OCI-LY7 (cell line): ENCODE measurements at regions of chr3 and their contacts with region 1.

Region 1: GRCh38 chr3:13452490-13453335 is 27.4 kb upstream of the HDAC11 start:
- DNase-seq: peak; percentile 77
- H3K4me3 ChIP-seq: peak overlapping the region; percentile 65
- H3K27ac ChIP-seq: peak overlapping the region; percentile 83
- H3K4me1 ChIP-seq: peaks cover 24% of the 10 kb centered on the region
- CTCF ChIP-seq: peak; percentile 95

Region 2: GRCh38 chr3:12954891-12955650 is 497.6 kb before region 1 on chr3:
- CTCF ChIA-PET with region 1: no interaction called
- POLR2A ChIA-PET with region 1: interaction called, 10 read pairs
- intact Hi-C with region 1: no loop called
- DNase-seq: peak; percentile 52
- H3K4me3 ChIP-seq: no peak overlapping the region
- H3K27ac ChIP-seq: no peak overlapping the region
- H3K4me1 ChIP-seq: peaks cover 26% of the 10 kb centered on the region
- CTCF ChIP-seq: no peak

Region 3: GRCh38 chr3:13235079-13235478 is 217.6 kb before region 1 on chr3:
- CTCF ChIA-PET with region 1: interaction called, 3 read pairs
- POLR2A ChIA-PET with region 1: no interaction called
- intact Hi-C with region 1: loop called (anchors 10 kb)
- DNase-seq: peak; percentile 86
- H3K4me3 ChIP-seq: peak overlapping the region; percentile 11
- H3K27ac ChIP-seq: peak overlapping the region; percentile 32
- H3K4me1 ChIP-seq: peaks cover 49% of the 10 kb centered on the region
- CTCF ChIP-seq: no peak

Region 4: GRCh38 chr3:13391308-13391707 is 61.4 kb before region 1 on chr3:
- CTCF ChIA-PET with region 1: interaction called, 5 read pairs
- POLR2A ChIA-PET with region 1: no interaction called
- intact Hi-C with region 1: loop called (anchors 1 kb)
- DNase-seq: peak; percentile 30
- H3K4me3 ChIP-seq: no peak overlapping the region
- H3K27ac ChIP-seq: no peak overlapping the region
- H3K4me1 ChIP-seq: no peaks in the 10 kb centered on the region
- CTCF ChIP-seq: peak; percentile 57

Region 5: DNA sequence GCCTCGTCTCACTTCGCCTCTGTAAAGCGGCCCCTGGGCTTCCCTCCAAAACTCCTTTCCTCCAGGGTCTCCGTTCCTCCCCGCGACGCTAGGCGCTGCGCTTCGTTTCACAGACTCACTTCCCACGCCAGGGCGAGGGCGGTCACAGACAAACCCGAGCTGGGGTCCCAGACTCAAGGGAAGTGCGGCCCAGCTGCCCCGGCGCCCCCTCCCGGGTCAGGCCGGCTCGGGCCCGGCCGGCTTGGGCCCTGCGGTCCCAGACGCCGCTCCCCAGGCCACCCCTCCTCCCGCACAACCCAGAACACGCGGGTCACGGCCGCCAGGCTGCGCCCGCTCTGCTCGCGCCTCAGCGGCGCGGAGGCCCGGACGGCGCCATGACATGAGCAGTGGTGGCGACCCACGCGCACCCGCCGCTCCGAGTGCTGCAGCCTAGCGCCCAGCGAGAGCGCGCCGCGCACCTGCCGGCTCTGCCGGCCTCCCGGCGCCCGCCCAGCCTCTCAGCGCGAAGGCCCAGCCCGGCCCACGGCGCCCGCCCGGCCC is 33.1 kb before region 1 on chr3:
- CTCF ChIA-PET with region 1: interaction called, 13 read pairs
- POLR2A ChIA-PET with region 1: interaction called, 61 read pairs
- intact Hi-C with region 1: loop called (anchors 1 kb)
- DNase-seq: peak; percentile 72
- H3K4me3 ChIP-seq: peak overlapping the region; percentile 98
- H3K27ac ChIP-seq: peak overlapping the region; percentile 91
- H3K4me1 ChIP-seq: peaks cover 69% of the 10 kb centered on the region
- CTCF ChIP-seq: peak; percentile 40